ENCODE measurements at regions of chr10 and their contacts with region 1.

Region 1: GRCh38 chr10:45672181-45673073 is at the start of gene ZFAND4:
- DNase-seq: peak; percentile 96
- H3K4me3 Mint-ChIP-seq: peak within 1 kb of the TSS; percentile 84
- H3K27ac Mint-ChIP-seq: peak within 1 kb of the TSS; percentile 91
- H3K4me1 Mint-ChIP-seq: peaks cover 35% of the 10 kb centered on the region
- H3K27me3 Mint-ChIP-seq: peaks cover 3% of the 10 kb centered on the region
- total RNA-seq, gene ZFAND4: 16.5 to 18.5 TPM

Region 2: GRCh38 chr10:45464958-45465567 is 207.4 kb before region 1 on chr10:
- CTCF ChIA-PET with region 1: interaction called, 12 read pairs
- POLR2A ChIA-PET with region 1: no interaction called
- DNase-seq: peak; percentile 82
- H3K4me3 Mint-ChIP-seq: no peak overlapping the region
- H3K27ac Mint-ChIP-seq: peak overlapping the region; percentile 39
- H3K4me1 Mint-ChIP-seq: peaks cover 52% of the 10 kb centered on the region
- H3K27me3 Mint-ChIP-seq: no peaks in the 10 kb centered on the region

Region 3: DNA sequence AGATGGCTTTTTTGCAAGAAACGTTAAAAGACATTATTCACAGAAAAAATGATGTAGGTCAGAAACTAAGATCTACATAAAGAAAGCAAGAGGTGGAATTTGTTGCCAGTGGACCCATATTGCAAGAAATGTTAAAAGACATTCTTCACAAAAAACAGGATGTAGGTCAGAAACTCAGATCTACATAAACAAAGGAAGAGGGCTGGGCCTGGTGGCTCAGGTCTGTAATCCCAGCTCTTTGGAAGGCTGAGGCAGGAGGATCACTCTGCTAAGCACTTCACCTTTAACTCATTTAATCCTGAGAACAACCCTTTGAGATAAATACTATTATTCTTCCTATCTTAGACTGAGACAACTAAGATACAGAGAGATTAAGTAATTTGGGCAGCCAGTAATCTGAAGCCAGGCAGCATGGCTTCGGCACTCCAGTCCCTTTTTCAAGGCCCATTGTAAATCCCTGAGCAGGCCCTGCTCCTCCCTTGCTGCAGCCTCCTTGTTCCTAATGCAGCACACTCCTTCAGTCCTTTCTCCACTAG is 11.5 kb before region 1 on chr10:
- CTCF ChIA-PET with region 1: interaction called, 9 read pairs
- POLR2A ChIA-PET with region 1: interaction called, 10 read pairs
- DNase-seq: no peak
- H3K4me3 Mint-ChIP-seq: no peak overlapping the region
- H3K27ac Mint-ChIP-seq: peak overlapping the region; percentile 85
- H3K4me1 Mint-ChIP-seq: peaks cover 43% of the 10 kb centered on the region
- H3K27me3 Mint-ChIP-seq: no peaks in the 10 kb centered on the region